ENCODE measurements at regions of chr10 and their contacts with region 1.

Region 1: DNA sequence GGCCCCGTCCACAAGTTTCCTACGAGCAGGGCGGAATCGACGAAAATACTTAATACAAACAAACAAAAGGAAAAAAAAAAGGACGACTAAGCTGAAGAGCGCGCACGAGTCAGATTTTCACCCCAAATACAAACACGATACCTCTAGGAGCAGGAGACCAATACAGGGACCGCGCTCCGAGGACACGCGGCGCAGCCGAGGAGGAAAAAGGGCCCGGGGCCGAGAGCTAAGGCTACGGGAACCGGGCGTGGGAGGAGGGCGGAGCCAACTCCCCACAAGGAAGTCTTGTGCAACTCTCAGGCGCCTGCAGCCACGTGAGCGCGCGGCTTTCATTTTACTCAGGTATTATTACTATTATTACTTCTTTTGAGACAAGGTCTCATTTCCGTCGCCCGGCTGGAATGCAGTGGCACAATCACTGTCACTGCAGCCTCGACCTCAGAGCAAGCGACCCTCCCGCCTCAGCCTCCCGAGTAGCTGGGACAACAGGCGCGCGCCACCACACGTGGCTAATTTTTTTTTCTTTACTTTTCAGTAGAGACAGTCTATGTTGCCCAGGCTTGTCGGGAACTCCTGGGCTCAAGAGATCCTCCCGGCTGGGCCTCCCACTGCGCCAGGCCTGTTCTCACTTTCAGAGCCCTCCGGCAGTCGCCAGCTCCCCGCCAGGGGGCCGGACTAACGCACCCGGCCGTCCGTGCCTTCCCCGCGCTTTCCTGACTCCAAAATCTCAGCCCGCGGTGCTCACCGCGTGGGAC is 1.2 kb downstream of the HNRNPF start:
- DNase-seq: peak; percentile 76
- ATAC-seq: peak; percentile 24
- H3K4me3 ChIP-seq: peak overlapping the region; percentile 92 to 93
- H3K27ac ChIP-seq: peak overlapping the region; percentile 96
- H3K4me1 ChIP-seq: peaks cover 46 to 64% of the 10 kb centered on the region in 2 experiments
- H3K27me3 ChIP-seq: no peaks in the 10 kb centered on the region
- CTCF ChIP-seq: peak in 2 of 3 experiments; percentile 41 to 50; a peak in 4 of 6 replicates
- POLR2A ChIP-seq: peak; percentile 66
- RAD21 ChIP-seq: no peak

Region 2: DNA sequence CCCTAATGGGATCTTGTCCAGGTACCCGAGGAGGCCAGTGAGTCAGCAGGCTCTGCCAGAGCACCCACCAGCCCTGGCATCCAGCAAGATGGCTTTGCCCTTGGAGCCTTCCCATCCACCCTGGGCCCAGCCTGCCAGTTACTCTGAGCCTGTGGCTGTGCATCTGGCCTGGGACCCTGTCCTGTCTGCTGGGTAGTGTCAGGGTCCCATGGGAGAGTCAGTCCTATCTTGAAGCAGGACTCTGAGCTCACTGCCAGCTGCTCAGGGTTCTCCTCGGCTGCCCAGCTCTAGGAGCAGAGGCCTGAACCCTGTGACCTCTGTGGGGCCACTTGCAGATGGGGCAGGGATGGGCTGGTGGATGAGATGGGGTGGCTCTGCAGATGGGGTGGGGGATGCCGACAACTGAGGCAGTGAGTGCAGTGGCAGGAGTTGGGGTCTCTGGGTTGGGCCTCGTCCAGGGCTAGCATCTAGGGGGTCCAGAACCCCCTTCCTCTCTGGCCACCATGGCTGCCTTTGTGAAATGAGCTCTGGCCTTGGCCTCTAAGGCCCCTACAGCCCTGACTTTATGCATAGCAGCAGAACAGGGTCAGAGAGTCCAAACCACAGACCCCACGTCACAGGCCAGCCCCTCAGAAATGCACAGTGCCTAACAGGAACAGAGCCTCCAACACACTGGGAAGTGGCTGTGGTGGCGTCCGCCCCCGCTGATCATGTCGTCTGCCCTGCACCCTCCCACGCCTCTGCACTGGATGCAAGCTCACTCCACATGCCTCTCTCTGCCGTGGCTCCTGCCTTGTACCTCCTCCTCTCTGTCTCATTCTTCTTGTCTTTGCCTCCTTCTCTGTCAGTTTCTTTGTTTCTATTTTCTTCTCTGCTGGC is 419.0 kb before region 1 on chr10:
- CTCF ChIA-PET with region 1: no interaction called
- POLR2A ChIA-PET with region 1: no interaction called
- RAD21 ChIA-PET with region 1: no interaction called
- intact Hi-C with region 1: no loop called
- DNase-seq: no peak
- ATAC-seq: no peak
- H3K4me3 ChIP-seq: no peak overlapping the region
- H3K27ac ChIP-seq: no peak overlapping the region
- H3K4me1 ChIP-seq: no peaks in the 10 kb centered on the region
- H3K27me3 ChIP-seq: no peaks in the 10 kb centered on the region
- CTCF ChIP-seq: no peak
- POLR2A ChIP-seq: no peak
- RAD21 ChIP-seq: no peak

Region 3: DNA sequence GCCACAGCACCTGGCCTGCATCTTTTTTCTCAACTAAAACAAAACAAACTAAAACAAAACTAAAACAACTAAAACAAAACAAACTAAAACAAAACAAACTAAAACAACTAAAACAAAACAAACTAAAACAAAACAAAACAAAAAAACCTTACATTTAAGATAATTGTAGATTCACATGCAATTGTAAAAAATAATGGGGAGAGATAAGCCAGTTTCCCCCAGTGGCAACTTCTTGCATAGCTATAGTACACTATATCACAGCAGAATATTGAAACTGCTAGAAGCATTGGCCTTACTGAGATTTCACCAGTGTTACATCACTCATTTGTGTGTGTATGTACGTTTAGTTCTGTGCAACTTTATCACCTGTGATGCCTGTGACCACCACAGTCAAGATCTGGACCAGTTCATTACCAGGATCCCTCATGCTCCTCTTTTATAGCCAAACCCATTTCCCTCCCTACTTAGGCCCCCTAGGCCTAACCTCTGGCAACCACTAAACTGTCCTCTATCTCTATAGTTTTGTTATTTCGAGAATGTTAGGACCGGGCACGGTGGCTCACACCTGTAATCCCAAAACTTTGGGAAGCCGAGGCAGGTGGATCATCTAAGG is 27.0 kb before region 1 on chr10:
- CTCF ChIA-PET with region 1: no interaction called
- POLR2A ChIA-PET with region 1: interaction called, 10 read pairs
- RAD21 ChIA-PET with region 1: no interaction called
- intact Hi-C with region 1: no loop called
- DNase-seq: peak; percentile 59
- ATAC-seq: no peak
- H3K4me3 ChIP-seq: no peak overlapping the region
- H3K27ac ChIP-seq: no peak overlapping the region
- H3K4me1 ChIP-seq: peaks cover 10 to 15% of the 10 kb centered on the region in 2 experiments
- H3K27me3 ChIP-seq: no peaks in the 10 kb centered on the region
- CTCF ChIP-seq: peak in 2 of 3 experiments; percentile 26 to 40; a peak in 3 of 6 replicates
- POLR2A ChIP-seq: no peak
- RAD21 ChIP-seq: no peak

Region 4: DNA sequence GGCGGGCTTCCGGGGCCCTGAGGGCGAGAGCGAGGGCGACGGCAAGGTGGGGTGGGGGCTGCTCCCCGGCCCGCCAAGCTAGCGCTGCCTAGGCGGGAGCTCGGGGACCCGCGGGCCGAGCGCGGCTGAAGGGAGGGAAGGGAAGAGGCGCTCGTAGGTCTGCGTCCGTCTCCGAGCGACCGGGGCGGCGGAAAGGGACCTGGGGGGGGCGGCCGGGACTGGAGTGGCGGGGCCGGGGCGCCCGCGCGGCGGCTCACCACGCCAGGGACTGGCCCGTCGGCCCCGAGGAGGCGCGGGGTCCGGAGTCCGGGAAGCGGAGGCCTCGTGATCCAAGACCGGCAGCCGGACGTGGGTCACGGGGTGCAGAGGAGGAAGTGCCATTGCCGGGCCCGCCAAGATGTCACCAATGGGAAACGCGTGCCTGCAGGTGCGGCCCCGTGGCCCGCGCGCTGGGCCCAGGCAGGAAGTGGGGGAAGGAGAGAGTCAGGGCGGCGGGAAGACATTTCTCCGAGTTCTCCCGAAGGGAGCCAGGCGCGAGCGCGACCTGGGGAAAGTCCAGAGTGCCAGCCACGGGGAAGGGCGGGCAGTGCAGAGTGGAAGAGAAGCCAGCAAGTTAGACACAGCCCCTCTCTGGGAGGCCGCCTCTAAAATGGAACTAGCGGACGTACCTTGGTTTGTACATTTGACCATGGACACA is 10.7 kb before region 1 on chr10:
- CTCF ChIA-PET with region 1: no interaction called
- POLR2A ChIA-PET with region 1: interaction called, 11 read pairs
- RAD21 ChIA-PET with region 1: interaction called in 1 of 2 experiments, 3 read pairs
- intact Hi-C with region 1: loop called (anchors 1 kb)
- DNase-seq: peak; percentile 76
- ATAC-seq: peak; percentile 78
- H3K4me3 ChIP-seq: peak overlapping the region; percentile 55 to 60
- H3K27ac ChIP-seq: peak overlapping the region; percentile 96
- H3K4me1 ChIP-seq: peaks cover 39 to 70% of the 10 kb centered on the region in 2 experiments
- H3K27me3 ChIP-seq: no peaks in the 10 kb centered on the region
- CTCF ChIP-seq: no peak
- POLR2A ChIP-seq: no peak
- RAD21 ChIP-seq: no peak

Region 5: GRCh38 chr10:43417950-43418768 is 10.4 kb after region 1 on chr10:
- CTCF ChIA-PET with region 1: no interaction called
- POLR2A ChIA-PET with region 1: interaction called, 5 read pairs
- RAD21 ChIA-PET with region 1: interaction called in 1 of 2 experiments, 6 read pairs
- intact Hi-C with region 1: loop called (anchors 1 kb)
- DNase-seq: no peak
- ATAC-seq: peak; percentile 15; the same call in 1 of the 2 replicates
- H3K4me3 ChIP-seq: 0 out of 4 replicates have a peak overlapping the region, but pooled peaks of 1 of the 2 experiments have one; percentile 2
- H3K27ac ChIP-seq: peak overlapping the region; percentile 36; the same call in 1 of the 2 replicates
- H3K4me1 ChIP-seq: peaks cover 33 to 44% of the 10 kb centered on the region in 2 experiments
- H3K27me3 ChIP-seq: no peaks in the 10 kb centered on the region
- CTCF ChIP-seq: no peak
- POLR2A ChIP-seq: no peak
- RAD21 ChIP-seq: no peak

Region 6: DNA sequence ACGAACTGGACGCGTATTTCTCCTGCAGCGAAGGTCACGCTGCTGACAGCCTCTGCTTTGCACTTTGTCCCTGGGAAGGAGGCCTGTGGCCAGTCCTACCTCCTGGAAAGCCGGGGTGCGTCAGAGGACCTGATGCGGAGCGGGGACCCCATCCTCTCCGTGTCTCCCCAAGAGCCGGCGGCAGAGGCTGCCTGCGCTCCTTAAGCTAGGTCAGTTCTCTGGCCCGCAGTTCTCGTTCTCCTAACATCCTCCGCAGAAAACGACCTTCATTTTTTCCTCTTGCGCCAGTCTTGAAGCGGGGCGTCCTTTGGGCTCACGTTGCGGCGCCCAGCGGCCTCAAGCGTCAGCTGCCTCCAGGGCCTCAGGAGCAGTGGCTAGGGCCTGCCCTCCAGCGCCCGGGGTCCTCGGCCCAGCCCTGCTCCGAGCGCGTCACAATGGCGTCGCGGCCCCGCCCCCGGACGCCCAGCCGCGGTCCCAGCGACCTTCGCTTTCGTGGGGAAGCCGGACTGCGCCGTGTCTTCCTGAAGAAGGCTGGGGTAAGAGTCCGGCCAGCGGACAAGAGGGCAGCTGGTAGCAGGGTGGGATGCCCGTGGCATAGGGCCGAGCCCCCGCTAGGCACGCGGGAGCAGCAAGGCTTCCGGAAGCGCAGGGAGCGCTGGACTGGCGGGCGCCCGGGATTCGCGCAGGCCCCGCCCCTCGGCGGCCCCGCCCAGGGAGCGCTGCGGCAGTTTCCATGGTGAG is 28.8 kb after region 1 on chr10 and contains the start of gene ZNF487:
- CTCF ChIA-PET with region 1: no interaction called
- POLR2A ChIA-PET with region 1: interaction called, 6 read pairs
- RAD21 ChIA-PET with region 1: interaction called in 1 of 2 experiments, 3 read pairs
- intact Hi-C with region 1: loop called (anchors 2 kb)
- DNase-seq: peak; percentile 73
- ATAC-seq: peak; percentile 94
- H3K4me3 ChIP-seq: peak within 1 kb of the TSS; percentile 87 to 95
- H3K27ac ChIP-seq: peak within 1 kb of the TSS; percentile 98
- H3K4me1 ChIP-seq: peaks cover 11 to 13% of the 10 kb centered on the region in 2 experiments; a peak in 3 of 4 replicates
- H3K27me3 ChIP-seq: no peaks in the 10 kb centered on the region
- CTCF ChIP-seq: no peak
- POLR2A ChIP-seq: peak; percentile 89
- RAD21 ChIP-seq: peak; percentile 39
- total RNA-seq, gene ZNF487: 4.0 TPM

Region 7: GRCh38 chr10:43863859-43864591 is 456.3 kb after region 1 on chr10:
- CTCF ChIA-PET with region 1: no interaction called
- POLR2A ChIA-PET with region 1: no interaction called
- RAD21 ChIA-PET with region 1: no interaction called
- intact Hi-C with region 1: no loop called
- DNase-seq: no peak
- ATAC-seq: no peak
- H3K4me3 ChIP-seq: no peak overlapping the region
- H3K27ac ChIP-seq: no peak overlapping the region
- H3K4me1 ChIP-seq: no peaks in the 10 kb centered on the region
- H3K27me3 ChIP-seq: peaks cover 23% of the 10 kb centered on the region
- CTCF ChIP-seq: no peak
- POLR2A ChIP-seq: no peak
- RAD21 ChIP-seq: no peak